ENCODE measurements at regions of chr7 and their contacts with region 1.

Region 1: DNA sequence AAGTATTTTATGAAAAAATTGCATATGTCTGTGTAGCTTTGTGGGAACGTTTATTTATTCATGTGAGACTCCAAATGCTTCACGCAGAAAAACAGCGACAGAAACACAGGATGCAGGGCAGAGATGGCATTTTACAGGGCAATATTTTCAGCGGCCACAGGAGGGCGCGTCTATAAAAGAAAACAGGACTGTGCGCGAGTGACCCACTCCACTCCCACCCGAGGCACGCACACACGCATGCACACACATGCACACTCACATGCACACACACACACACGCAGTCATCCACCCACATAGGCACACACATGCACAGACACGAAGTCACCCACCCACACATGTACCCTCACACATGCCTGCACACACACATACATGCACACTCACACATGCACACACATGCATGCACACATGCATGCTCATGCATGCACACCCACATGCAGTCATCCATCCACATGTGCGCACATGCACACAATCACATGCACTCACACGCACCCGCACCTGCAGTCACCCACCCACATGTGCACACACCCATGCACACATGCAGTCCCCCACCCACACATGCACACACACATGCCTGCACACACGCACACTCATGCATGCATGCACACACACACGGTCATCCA is 96.3 kb downstream of the DNAJB6 start:
- DNase-seq: no peak

Region 2: GRCh38 chr7:157150882-157151281 is 282.2 kb before region 1 on chr7:
- intact Hi-C with region 1: no loop called
- DNase-seq: no peak

Region 3: DNA sequence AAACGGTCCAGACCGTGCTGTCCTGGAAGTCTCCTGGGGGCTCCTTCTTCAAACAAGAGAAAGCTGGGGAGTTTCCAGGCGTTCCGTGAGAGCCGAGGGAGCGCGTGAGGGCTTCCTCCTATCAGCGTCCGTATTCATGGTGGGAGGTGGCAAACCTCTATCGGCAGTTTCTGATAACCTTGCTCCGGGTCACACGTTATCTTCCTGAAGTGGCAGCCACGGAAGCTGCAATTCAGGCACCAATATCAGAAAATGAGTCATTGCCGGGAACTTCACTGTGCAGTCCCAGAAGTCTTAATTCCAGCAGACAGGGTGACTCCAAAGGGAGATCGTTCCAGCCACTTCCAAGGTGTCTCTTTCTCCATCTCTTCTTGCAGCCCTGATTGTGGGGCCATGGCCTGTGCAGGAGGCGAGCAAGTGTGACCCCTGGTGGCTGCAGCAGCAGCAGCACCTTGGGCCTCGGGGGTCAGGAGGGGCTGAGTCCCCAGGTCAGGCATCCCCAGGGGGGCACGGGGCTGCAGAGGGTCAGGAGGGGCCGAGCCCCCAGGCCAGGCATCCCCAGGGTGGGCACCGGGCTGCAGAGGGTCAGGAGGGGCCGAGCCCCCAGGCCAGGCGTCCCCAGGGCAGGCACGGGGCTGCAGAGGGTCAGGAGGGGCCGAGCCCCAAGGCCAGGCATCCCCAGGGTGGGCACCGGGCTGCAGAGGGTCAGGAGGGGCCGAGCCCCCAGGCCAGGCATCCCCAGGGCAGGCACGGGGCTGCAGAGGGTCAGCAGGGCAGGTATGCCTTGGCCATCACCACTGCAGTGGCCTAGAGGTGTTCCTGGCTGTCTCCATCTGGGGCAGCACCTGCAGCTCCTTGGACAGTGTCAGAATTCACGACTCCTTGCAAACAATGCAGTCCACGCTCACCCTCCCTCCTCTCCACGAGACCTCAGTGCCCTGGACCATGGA is 442.4 kb after region 1 on chr7:
- intact Hi-C with region 1: loop called (anchors 5 kb)
- DNase-seq: no peak

Region 4: DNA sequence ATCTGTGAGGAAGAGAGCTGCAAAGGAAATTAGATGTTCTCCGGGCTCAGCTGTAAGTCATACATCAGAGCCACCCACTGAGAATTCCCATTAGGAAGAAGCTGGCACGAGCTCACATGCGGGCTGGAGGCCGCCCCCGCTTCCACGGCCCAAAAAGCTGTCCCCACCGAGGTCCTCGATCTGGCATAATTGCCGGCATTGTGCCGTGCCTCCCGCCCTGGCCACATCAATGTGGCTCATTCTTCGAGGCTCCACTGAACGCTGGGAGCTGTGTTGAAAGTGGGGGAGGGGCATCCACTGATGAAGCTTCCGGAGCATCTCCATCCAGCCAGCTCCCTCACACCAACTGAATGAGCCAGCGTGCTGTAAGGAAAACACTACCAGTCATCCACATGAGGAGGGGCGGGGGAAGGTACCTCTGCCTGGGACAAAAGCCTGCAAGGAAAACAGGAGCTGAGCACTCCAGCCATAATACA is 981.5 kb after region 1 on chr7:
- intact Hi-C with region 1: loop called (anchors 5 kb)
- DNase-seq: peak; percentile 58